Activated T-helper 1 cell treated with anti-CD3 and anti-CD28 coated beads, Interleukin-12 subunit alpha, Interleukin-12 subunit beta, Interleukin-2, Interleukin-4 antibody, amounts not matched to agents 30 ng/mL and 10 ng/mL and 1 ng/mL, durations not matched to agents 14 hours and 24 hours and 36 hours (primary cell): ENCODE measurements at regions of chr1 and their contacts with region 1.

Region 1: GRCh38 chr1:113859478-113860175 is 11.9 kb downstream of the PTPN22 start:
- DNase-seq: no peak
- H3K4me3 Mint-ChIP-seq: peak overlapping the region; percentile 24
- H3K27ac Mint-ChIP-seq: peak overlapping the region; percentile 62
- H3K4me1 Mint-ChIP-seq: peaks cover 43% of the 10 kb centered on the region
- H3K27me3 Mint-ChIP-seq: no peaks in the 10 kb centered on the region

Region 2: GRCh38 chr1:113783254-113784099 is 76.2 kb before region 1 on chr1:
- intact Hi-C with region 1: no loop called
- DNase-seq: peak; percentile 41
- H3K4me3 Mint-ChIP-seq: peak overlapping the region; percentile 59
- H3K27ac Mint-ChIP-seq: peak overlapping the region; percentile 93
- H3K4me1 Mint-ChIP-seq: peaks cover 25% of the 10 kb centered on the region
- H3K27me3 Mint-ChIP-seq: no peaks in the 10 kb centered on the region

Region 3: DNA sequence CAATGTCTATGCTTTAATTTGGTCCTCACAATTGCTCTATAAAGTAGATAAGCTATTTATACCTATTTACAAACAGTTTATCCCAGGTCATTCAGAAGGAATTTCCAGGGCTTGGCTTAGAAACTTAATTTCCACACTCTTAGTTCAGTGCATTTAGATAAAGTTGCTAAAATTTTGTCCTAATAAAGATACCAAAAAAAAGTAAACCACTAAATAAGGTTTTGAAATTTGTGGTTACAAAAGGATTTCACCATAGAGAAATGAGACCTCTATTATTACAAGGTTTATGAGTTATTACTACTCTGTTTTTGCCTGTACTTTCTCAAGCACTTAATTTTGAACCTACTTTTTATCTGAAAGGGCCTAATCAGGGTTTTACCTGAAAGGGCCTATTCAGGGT is 10.6 kb before region 1 on chr1:
- intact Hi-C with region 1: loop called (anchors 2 kb)
- DNase-seq: no peak
- H3K4me3 Mint-ChIP-seq: no peak overlapping the region
- H3K27ac Mint-ChIP-seq: no peak overlapping the region
- H3K4me1 Mint-ChIP-seq: peaks cover 14% of the 10 kb centered on the region
- H3K27me3 Mint-ChIP-seq: no peaks in the 10 kb centered on the region

Region 4: DNA sequence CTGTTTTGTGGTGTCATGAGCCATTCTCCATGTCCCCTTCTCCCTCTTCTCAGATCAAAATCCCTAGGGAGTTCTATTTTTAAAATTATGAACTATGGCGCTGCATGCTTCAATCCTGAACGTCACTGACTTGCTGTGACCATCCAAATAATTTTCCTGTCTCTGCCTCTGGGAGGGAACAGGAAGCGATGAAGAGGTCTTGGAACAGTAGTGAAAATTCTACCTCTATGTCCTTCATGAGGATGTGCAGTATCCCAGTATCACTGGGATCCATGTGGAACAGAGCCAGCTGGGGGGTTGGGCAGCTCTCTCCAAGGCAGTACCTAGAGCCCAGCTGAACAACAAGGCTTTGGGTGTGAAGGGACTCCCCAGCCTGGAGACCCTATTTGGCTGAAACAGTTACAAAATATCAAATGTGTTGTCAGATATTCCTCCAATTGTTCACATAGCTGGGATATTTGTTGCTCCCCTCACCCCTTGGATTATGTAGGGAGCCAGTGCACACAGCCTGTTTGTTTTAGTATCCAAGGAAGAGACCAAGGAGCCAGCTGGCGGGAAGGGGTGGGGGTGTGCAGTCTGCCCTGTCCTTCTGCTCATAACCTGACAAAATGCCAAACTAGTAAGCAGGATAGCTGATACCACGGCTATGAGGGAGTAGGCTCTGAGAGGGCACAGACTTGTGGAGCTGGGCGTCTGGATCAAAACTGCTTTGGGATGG is 53.1 kb after region 1 on chr1:
- intact Hi-C with region 1: no loop called
- DNase-seq: no peak
- H3K4me3 Mint-ChIP-seq: no peak overlapping the region
- H3K27ac Mint-ChIP-seq: no peak overlapping the region
- H3K4me1 Mint-ChIP-seq: peaks cover 17% of the 10 kb centered on the region
- H3K27me3 Mint-ChIP-seq: no peaks in the 10 kb centered on the region

Region 5: GRCh38 chr1:114320586-114320985 is 461.0 kb after region 1 on chr1:
- intact Hi-C with region 1: no loop called
- DNase-seq: no peak
- H3K4me3 Mint-ChIP-seq: no peak overlapping the region
- H3K27ac Mint-ChIP-seq: no peak overlapping the region
- H3K4me1 Mint-ChIP-seq: no peaks in the 10 kb centered on the region
- H3K27me3 Mint-ChIP-seq: peaks cover 9% of the 10 kb centered on the region